Left colon (tissue), 2 donors: ENCODE measurements at regions of chr4 and their contacts with region 1.

Region 1: DNA sequence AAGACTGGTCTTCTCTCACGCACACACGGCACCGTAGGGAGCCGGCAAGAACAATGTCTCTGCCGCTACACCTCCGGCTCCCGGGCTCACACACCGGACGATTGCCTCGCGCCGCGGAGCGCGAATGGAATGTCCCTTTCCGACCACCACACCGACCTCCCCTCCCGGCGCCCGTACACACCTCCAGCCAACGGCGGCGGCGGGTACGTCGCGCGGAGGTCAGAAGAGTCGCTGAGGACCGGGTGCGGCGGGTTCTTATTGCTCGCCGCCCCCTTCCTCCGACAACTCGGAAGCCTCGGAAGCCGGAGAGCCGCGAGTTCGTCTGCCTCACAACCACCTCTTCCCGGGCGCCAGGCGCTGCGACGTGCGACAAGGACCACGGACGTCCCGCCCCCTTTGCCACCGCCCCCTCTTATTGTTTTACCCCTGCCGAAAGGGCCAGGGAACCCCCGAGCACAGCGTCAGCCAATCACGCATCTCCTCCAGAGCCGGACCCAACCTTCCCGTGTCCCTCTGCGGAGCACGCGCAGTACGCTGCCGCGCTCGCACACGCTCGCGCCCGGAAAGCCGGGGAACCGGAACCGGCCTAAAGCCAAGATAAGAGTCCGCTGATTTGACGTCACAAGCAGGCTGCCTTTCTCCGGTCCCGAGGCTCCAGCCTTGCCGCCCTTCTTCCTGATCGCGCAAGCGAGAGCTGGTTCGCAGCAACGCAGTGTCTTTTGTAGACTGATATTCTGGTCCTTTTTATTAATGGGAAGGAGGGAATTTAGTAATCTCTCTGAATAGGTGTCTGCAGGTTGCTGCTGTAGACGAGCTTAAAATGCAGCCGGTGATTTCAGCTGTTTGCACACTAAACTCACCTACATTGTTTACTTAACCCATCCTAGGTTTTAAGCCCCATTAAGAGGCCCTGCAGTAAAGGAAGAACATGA is at the start of gene G3BP2:
- DNase-seq: peak; percentile 98 to 99
- ATAC-seq: peak; percentile 93
- total RNA-seq, gene G3BP2: 158 to 159 TPM

Region 2: DNA sequence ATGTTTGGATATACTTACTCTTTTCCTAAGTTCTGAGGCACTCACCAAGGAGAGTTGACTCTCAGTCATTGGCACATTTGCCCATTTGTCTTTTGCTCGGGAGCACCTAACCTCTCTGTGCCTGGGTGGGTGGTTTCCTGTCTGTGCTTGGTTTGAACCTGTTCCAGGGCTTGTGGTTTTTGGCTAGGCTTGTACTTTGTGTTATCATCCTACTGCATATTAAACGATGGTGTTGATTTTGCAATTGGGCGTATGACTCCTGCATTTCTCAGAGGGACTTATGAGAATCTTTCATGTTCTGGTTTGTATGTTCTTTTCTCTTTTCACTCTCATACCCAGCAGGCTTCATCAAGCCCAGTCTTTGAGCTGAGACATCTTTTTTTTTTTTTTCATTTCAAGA is 1040.7 kb before region 1 on chr4:
- intact Hi-C with region 1: no loop called
- DNase-seq: peak; percentile 18 to 58
- ATAC-seq: peak; percentile 61

Region 3: GRCh38 chr4:75724066-75724866 is 51.0 kb after region 1 on chr4 and contains the start of gene USO1:
- intact Hi-C with region 1: loop called in 1 of 2 experiments (anchors 10 kb)
- DNase-seq: peak; percentile 99
- ATAC-seq: peak; percentile 95
- total RNA-seq, gene USO1: 51.5 to 55.4 TPM